ENCODE measurements at regions of chr1 and their contacts with region 1.

Region 1: DNA sequence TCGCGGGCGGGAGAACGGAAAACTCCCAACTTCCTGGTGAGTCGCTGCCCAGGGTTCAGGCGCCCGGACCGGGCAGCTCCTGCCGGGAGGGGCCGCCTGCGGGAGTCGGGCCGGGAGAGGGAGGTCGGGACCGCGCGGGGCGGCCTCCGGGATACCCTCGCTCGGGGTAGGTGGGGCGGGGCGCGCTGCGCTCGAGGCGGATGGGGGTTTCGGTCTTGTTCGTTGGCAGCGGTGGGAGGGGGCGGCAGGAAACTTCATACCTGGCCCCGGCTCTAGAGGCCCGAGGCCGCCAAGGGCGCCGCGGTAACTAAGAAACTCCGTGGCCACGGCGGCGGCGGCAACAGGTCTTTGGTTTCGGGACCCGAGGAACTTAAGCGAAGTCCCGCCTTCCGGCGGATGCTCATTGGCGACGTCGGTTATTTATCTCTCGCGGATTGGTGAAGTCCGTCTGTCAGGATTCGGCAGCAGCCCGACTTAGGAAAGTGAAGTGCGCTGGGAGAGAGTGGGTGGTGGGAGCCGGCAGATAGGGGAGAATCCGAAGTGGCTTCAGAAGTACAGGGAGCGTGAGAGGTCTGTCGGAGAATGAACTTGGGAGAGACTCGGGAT is 546 bp downstream of the NEK7 start:
- DNase-seq: peak; percentile 79
- H3K4me3 Mint-ChIP-seq: peak overlapping the region; percentile 99
- H3K27ac Mint-ChIP-seq: peak overlapping the region; percentile 96
- H3K4me1 Mint-ChIP-seq: peaks cover 36% of the 10 kb centered on the region
- H3K27me3 Mint-ChIP-seq: no peaks in the 10 kb centered on the region

Region 2: DNA sequence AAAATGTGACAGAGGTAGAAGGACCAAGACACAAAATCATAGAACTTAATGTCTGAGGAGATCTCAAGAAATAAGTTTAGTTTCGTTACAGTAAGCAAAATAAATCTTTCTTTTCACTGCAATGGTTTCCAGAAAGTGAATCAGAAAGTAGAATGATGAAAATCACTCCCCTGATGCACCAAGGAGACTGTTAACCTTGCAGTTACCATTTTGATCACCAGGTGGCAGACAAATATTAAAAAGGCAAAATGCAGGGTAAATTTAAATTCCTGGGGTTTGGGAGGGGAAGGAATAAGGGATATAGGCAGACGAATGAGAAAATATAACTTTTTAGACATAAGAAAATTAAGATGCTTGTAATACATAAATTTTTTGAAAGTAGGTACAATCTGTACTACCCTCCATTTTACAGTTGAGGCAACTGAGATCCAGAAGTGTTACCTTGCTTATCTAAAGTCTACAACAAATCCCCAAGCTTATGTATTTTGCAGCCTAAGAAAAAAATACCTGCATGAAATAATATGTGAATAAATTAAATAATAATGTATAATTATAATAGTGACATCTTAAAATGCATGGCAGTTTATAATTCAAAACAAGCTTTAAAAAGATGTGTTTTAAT is 636.1 kb before region 1 on chr1:
- intact Hi-C with region 1: loop called (anchors 10 kb)
- DNase-seq: no peak
- H3K4me3 Mint-ChIP-seq: no peak overlapping the region
- H3K27ac Mint-ChIP-seq: no peak overlapping the region
- H3K4me1 Mint-ChIP-seq: peaks cover 5% of the 10 kb centered on the region
- H3K27me3 Mint-ChIP-seq: no peaks in the 10 kb centered on the region

Region 3: DNA sequence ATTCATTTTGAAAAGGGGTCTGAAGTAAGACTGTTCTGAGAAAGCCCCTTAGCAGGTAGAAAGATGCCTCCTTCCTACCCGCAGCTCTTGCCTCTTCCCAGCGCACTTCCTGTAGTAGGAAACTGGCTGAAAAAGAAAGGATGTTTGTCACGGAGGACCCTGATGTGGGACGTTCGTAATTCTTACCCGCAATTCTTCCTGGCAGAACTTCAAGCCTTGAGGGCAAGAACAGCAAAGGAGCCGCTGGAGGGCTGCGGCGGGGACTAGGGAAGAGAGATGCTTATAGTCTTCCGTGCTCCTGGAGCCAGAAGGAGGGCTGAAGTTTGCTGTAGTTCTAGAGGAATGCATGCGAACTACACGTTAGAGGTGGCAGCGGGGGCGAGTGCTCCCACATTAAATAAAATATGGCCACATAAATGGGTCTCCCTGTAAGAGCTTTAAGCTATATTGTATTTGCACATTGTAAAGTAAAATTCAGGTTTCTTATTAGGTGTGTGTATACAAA is 248.6 kb before region 1 on chr1:
- intact Hi-C with region 1: loop called (anchors 2 kb)
- DNase-seq: no peak
- H3K4me3 Mint-ChIP-seq: peak overlapping the region; percentile 9
- H3K27ac Mint-ChIP-seq: no peak overlapping the region
- H3K4me1 Mint-ChIP-seq: peaks cover 51% of the 10 kb centered on the region
- H3K27me3 Mint-ChIP-seq: peaks cover 93% of the 10 kb centered on the region

Region 4: DNA sequence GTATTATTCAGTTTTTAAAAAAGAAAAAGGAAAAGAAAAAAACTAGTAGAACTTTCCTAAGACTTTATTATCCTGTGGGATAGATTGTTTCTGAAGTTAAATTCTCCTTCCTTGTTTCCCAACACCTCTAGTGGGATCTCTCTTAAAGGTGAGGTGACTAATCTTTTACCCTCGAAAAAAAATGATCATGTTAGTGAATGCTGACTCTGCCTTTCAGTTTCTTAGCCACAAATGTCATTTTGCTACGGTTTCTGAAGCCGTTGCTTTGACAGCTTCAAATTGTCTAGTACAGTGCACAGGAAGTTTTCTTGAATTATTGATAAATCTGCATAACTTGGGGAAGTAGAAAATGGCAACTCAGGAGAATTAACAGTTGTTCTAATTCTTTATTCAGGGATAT is 13.5 kb before region 1 on chr1:
- intact Hi-C with region 1: no loop called
- DNase-seq: no peak
- H3K4me3 Mint-ChIP-seq: no peak overlapping the region
- H3K27ac Mint-ChIP-seq: no peak overlapping the region
- H3K4me1 Mint-ChIP-seq: peaks cover 23% of the 10 kb centered on the region
- H3K27me3 Mint-ChIP-seq: no peaks in the 10 kb centered on the region

Region 5: DNA sequence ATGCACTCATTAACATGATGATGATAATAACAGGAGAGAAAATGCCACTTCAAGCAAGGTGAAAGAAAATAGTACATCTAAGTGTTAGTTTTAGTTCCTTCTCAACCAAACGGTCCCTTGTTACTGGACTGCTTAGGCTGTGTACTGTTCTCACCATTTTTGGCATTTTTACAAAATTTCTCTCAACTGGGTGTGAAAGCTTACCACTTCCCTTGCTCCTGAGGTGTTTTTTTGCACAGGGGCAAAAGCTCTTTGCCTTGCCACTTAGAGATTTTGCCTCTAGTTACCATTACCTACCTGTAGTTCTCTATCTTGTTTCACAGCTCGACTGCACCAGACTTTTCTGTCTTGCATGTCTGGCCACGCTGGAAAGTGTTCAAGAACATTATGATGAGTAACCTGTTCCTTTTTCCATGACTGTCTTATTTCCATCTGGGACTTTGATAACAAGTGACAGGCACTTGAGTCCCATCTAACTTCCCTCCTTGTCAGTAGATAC is 10.1 kb after region 1 on chr1:
- intact Hi-C with region 1: loop called (anchors 1 kb)
- DNase-seq: no peak
- H3K4me3 Mint-ChIP-seq: peak overlapping the region; percentile 48
- H3K27ac Mint-ChIP-seq: peak overlapping the region; percentile 89
- H3K4me1 Mint-ChIP-seq: peaks cover 70% of the 10 kb centered on the region
- H3K27me3 Mint-ChIP-seq: no peaks in the 10 kb centered on the region

Region 6: GRCh38 chr1:198201956-198202784 is 44.8 kb after region 1 on chr1:
- intact Hi-C with region 1: loop called (anchors 1 kb)
- DNase-seq: no peak
- H3K4me3 Mint-ChIP-seq: peak overlapping the region; percentile 61
- H3K27ac Mint-ChIP-seq: peak overlapping the region; percentile 82
- H3K4me1 Mint-ChIP-seq: peaks cover 71% of the 10 kb centered on the region
- H3K27me3 Mint-ChIP-seq: no peaks in the 10 kb centered on the region

Region 7: GRCh38 chr1:198272492-198272891 is 115.1 kb after region 1 on chr1:
- intact Hi-C with region 1: loop called (anchors 5 kb)
- DNase-seq: no peak
- H3K4me3 Mint-ChIP-seq: no peak overlapping the region
- H3K27ac Mint-ChIP-seq: peak overlapping the region; percentile 71
- H3K4me1 Mint-ChIP-seq: peaks cover 26% of the 10 kb centered on the region
- H3K27me3 Mint-ChIP-seq: no peaks in the 10 kb centered on the region

Region 8: GRCh38 chr1:198465201-198466144 is 308.1 kb after region 1 on chr1:
- intact Hi-C with region 1: loop called (anchors 5 kb)
- DNase-seq: no peak
- H3K4me3 Mint-ChIP-seq: no peak overlapping the region
- H3K27ac Mint-ChIP-seq: peak overlapping the region; percentile 12
- H3K4me1 Mint-ChIP-seq: peaks cover 17% of the 10 kb centered on the region
- H3K27me3 Mint-ChIP-seq: no peaks in the 10 kb centered on the region